Activated T-helper 1 cell treated with anti-CD3 and anti-CD28 coated beads, Interleukin-12 subunit alpha, Interleukin-12 subunit beta, Interleukin-2, Interleukin-4 antibody, amounts not matched to agents 30 ng/mL and 10 ng/mL and 1 ng/mL, durations not matched to agents 14 hours and 24 hours and 36 hours (primary cell): ENCODE measurements at regions of chr10 and their contacts with region 1.

Region 1: DNA sequence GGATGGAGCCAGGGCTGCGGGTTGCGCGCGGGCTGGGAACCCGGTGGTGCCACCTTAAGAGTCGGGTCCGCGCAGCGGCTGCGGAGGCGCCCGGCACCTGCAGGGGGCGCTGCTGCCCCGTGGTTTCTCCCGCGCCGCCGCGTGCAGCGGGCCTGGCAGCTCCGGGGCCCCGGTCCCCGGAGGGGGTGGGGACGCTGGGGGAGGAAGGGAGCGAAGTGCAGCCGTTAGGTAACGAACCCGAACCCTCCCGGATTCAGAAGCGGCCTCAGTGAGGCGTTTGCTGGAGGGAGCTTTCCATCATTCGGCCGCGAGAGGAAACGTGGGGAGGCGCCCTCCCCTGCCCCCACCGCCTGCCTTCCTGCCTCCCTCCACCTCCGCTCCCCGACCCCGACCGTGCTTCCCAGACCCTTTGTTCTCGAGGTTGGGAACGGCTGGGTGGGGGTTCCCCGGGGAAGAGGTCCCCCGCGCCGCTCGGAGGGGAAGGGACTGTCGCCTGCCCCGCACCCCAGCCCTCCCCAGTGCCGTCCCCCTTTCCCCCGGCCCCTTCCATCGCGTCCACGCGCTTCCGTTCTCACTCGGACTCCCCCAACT is 29.6 kb downstream of the SKIDA1 start:
- DNase-seq: peak; percentile 82
- H3K4me3 Mint-ChIP-seq: peak overlapping the region; percentile 90
- H3K27ac Mint-ChIP-seq: no peak overlapping the region
- H3K4me1 Mint-ChIP-seq: peaks cover 20% of the 10 kb centered on the region
- H3K27me3 Mint-ChIP-seq: peaks cover 71% of the 10 kb centered on the region

Region 2: DNA sequence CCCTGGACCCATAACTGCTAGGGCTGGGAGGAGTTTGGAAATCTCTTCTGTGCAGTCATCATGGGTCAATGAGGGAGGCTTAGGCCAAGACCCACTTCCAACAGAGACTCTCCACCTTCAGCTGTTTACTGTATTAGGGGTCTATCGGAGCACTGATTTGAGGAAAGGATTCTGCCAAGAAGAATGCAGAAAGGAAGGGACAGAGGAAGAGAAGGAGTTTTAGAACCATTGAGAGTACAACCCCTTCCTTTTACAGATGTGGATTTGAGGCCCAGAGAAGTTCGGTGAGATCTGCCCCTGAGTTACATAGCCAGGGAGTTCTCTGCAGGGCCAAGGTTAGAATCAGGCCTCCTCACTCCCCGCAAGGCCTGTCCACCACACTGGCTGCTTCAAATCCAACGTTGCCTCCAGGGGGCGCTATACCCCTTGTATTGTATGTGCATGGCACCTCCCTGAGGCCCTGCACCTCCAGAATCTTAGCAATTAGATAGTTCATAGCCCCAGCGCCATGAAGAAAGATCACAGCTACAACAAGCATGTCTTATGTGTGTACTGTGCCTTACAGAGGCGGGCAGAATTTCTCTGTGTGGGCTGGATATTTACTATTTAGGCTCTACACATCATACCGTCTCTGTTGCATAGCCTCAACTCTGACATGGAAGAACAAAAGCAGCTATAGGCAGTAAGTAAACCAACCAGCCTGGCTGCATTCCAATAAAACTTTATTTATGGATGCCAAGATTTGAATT is 217.2 kb before region 1 on chr10:
- intact Hi-C with region 1: loop called (anchors 10 kb)
- DNase-seq: peak; percentile 39
- H3K4me3 Mint-ChIP-seq: no peak overlapping the region
- H3K27ac Mint-ChIP-seq: peak overlapping the region; percentile 27
- H3K4me1 Mint-ChIP-seq: no peaks in the 10 kb centered on the region
- H3K27me3 Mint-ChIP-seq: peaks cover 3% of the 10 kb centered on the region

Region 3: DNA sequence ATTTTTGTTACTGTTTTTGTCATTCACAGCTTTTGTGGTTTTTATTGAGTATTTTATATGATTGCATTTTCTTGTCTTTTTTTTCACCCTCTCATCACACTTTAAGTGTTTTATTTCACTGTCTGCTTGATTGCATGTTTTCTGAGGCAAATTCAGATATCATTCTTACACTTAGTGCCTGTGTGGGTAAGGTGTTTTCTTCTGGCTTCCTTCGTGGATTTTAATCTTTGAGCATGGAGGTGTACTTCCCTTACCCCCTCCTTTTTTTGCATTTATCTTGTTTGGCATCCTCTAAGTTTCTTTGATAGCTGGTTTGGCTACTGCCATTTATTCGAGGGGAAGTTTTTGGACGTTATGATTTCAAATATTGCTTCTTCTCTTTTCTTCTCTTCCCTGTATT is 166.1 kb after region 1 on chr10:
- intact Hi-C with region 1: no loop called
- DNase-seq: no peak
- H3K4me3 Mint-ChIP-seq: no peak overlapping the region
- H3K27ac Mint-ChIP-seq: no peak overlapping the region
- H3K4me1 Mint-ChIP-seq: peaks cover 12% of the 10 kb centered on the region
- H3K27me3 Mint-ChIP-seq: no peaks in the 10 kb centered on the region

Region 4: DNA sequence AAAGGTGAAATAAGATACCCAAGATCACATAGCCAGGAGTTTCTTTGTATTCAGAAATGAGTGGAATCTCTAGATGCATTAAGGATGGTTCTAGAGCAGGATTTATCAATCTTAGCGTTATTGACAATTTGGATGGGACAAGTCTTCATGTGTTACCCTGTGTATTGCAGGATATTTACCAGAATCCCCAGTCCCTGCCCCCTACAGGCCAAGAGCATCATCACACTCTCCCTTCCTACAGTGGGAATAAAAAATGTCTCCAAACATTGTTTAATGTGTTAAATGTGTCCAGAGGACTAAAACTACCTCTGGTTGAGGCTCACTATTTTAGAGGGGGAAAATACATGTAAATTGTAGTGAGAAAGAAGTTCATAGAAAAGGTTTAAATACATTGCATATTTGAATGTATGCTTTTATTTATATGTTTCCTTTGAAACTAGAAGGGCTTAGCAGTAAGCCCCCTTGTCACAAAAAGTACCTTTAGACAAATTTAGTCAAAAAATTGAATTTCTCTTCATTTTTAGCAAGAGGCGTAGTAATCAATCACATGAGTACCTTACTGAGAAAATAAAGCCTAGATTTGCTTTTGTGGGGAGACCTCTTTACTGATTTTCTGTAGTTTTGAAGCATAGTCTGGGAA is 179.4 kb after region 1 on chr10:
- intact Hi-C with region 1: loop called (anchors 1 kb)
- DNase-seq: peak; percentile 4
- H3K4me3 Mint-ChIP-seq: no peak overlapping the region
- H3K27ac Mint-ChIP-seq: no peak overlapping the region
- H3K4me1 Mint-ChIP-seq: peaks cover 7% of the 10 kb centered on the region
- H3K27me3 Mint-ChIP-seq: no peaks in the 10 kb centered on the region

Region 5: GRCh38 chr10:22222236-22223190 is 726.7 kb after region 1 on chr10:
- intact Hi-C with region 1: loop called (anchors 1 kb)
- DNase-seq: no peak
- H3K4me3 Mint-ChIP-seq: peak overlapping the region; percentile 2
- H3K27ac Mint-ChIP-seq: no peak overlapping the region
- H3K4me1 Mint-ChIP-seq: peaks cover 26% of the 10 kb centered on the region
- H3K27me3 Mint-ChIP-seq: peaks cover 2% of the 10 kb centered on the region

Region 6: GRCh38 chr10:22436884-22437619 is 941.2 kb after region 1 on chr10:
- intact Hi-C with region 1: loop called (anchors 5 kb)
- DNase-seq: peak; percentile 80
- H3K4me3 Mint-ChIP-seq: peak overlapping the region; percentile 91
- H3K27ac Mint-ChIP-seq: peak overlapping the region; percentile 96
- H3K4me1 Mint-ChIP-seq: peaks cover 49% of the 10 kb centered on the region
- H3K27me3 Mint-ChIP-seq: peaks cover 9% of the 10 kb centered on the region

Region 7: GRCh38 chr10:23095404-23095965 is 1599.6 kb after region 1 on chr10 and contains the start of gene MSRB2:
- intact Hi-C with region 1: loop called (anchors 10 kb)
- DNase-seq: peak; percentile 64
- H3K4me3 Mint-ChIP-seq: peak within 1 kb of the TSS; percentile 92
- H3K27ac Mint-ChIP-seq: peak within 1 kb of the TSS; percentile 91
- H3K4me1 Mint-ChIP-seq: peaks cover 36% of the 10 kb centered on the region
- H3K27me3 Mint-ChIP-seq: peaks cover 6% of the 10 kb centered on the region
- total RNA-seq, gene MSRB2: 3.0 and 4.0 TPM in 2 replicates